ENCODE measurements at regions of chr5 and their contacts with region 1.

Region 1: GRCh38 chr5:167723254-167723871 is 568.1 kb upstream of the WWC1 start:
- DNase-seq: peak; percentile 79
- ATAC-seq: peak; percentile 95

Region 2: DNA sequence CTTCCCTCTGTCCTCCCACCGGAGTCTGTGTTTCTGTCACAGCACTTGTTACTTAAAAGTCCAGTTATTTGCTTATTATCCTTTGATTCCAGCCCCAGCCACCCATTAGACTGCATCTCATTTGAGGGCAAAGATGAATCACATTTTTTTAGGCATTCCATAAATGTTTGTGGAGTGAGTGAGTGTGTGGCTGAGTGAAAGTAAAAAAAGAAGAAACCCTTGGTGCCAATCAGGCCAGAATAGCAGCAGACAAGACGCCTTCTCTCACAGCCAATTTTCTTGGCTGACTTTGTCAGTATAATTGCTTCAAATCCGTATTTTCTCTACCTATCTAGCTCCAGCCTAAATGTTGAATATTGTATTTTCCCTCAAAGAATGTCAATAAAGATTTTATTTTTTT is 44.9 kb before region 1 on chr5:
- intact Hi-C with region 1: no loop called
- DNase-seq: no peak
- ATAC-seq: no peak

Region 3: GRCh38 chr5:167888395-167888794 is 165.0 kb after region 1 on chr5:
- intact Hi-C with region 1: no loop called
- DNase-seq: no peak
- ATAC-seq: no peak

Region 4: DNA sequence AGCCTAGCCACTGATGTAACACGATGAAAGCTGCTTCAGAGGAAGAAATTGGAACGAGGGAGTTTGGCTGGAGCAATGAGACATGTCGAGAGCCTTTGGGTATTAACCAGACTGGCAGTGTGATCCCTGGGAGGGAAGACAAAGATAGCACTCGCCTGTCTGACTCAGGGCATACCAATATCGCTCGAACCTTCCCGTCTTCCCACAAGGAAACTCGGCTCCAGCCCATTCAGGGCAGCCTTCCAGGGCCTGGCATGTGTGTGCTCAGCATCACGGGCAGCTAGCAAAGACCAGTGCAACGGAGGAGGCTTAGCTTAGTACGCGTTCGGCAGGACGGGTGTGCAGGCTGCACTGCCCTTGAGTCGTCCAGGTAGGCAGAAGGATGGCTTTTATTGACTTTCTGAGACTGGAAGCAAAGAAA is 211.2 kb after region 1 on chr5:
- intact Hi-C with region 1: loop called (anchors 10 kb)
- DNase-seq: peak; percentile 87
- ATAC-seq: peak; percentile 87

Region 5: GRCh38 chr5:168020542-168021294 is 297.4 kb after region 1 on chr5:
- intact Hi-C with region 1: loop called (anchors 10 kb)
- DNase-seq: no peak
- ATAC-seq: peak; percentile 27

Region 6: DNA sequence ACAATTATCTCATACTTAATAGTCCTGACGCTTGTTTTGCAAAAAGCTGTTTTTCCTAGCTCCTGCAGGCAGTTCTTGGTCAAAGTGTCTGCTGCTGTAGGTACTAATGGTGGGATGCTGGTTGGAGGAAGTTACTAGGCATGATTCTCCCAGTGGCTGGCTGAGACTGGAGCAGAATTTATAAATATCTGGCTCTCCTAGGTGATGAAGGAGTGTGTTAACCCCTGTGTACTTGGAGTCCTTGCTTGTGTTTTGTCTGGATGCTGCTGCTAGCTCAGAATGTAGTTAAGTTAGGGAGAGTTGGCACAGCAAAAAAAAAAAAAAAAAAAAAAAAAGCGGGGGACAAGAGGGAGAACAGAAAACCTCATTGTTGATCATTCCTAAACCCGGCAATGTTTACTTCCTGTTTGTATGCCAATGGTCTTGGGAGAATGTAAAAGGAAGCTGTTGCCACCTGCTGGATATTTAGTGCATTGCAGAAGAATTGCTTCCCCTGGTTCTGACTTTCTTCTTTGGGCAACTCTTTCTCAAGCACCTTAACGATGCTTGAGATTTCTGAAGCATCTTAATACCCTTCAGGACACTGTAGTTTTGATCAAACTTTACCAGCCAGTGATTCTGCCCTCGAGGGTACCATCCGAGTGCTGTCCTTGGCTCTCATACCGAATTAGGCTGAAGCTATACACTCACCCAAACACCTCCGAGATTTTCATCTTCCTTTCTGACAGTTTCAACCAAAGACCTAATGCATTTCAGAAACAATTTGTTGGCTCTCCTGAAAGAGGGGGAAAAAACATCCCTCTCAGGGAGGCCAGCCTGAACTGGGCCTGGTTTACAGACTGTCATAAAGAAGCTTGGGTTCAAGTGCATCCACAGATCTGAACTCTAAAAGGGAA is 496.4 kb after region 1 on chr5:
- intact Hi-C with region 1: loop called (anchors 5 kb)
- DNase-seq: no peak
- ATAC-seq: peak; percentile 73

Measured in Right ventricle myocardium superior (tissue), 1 donor.